WTC11 (cell line): ENCODE measurements at regions of chr1 and their contacts with region 1.

Region 1: GRCh38 chr1:227729881-227730627 is 5.0 kb downstream of the JMJD4 start:
- DNase-seq: peak; percentile 74
- ATAC-seq: peak; percentile 27
- H3K4me3 Mint-ChIP-seq: peak overlapping the region; percentile 90
- H3K27ac Mint-ChIP-seq: peak overlapping the region; percentile 83
- H3K4me1 Mint-ChIP-seq: peaks cover 34% of the 10 kb centered on the region
- H3K27me3 Mint-ChIP-seq: peaks cover 13% of the 10 kb centered on the region
- CTCF ChIP-seq: peak; percentile 68

Region 2: GRCh38 chr1:227654858-227655752 is 74.9 kb before region 1 on chr1:
- CTCF ChIA-PET with region 1: no interaction called
- POLR2A ChIA-PET with region 1: no interaction called
- DNase-seq: no peak
- ATAC-seq: no peak
- H3K4me3 Mint-ChIP-seq: no peak overlapping the region
- H3K27ac Mint-ChIP-seq: no peak overlapping the region
- H3K4me1 Mint-ChIP-seq: no peaks in the 10 kb centered on the region
- H3K27me3 Mint-ChIP-seq: peaks cover 11% of the 10 kb centered on the region
- CTCF ChIP-seq: no peak

Region 3: DNA sequence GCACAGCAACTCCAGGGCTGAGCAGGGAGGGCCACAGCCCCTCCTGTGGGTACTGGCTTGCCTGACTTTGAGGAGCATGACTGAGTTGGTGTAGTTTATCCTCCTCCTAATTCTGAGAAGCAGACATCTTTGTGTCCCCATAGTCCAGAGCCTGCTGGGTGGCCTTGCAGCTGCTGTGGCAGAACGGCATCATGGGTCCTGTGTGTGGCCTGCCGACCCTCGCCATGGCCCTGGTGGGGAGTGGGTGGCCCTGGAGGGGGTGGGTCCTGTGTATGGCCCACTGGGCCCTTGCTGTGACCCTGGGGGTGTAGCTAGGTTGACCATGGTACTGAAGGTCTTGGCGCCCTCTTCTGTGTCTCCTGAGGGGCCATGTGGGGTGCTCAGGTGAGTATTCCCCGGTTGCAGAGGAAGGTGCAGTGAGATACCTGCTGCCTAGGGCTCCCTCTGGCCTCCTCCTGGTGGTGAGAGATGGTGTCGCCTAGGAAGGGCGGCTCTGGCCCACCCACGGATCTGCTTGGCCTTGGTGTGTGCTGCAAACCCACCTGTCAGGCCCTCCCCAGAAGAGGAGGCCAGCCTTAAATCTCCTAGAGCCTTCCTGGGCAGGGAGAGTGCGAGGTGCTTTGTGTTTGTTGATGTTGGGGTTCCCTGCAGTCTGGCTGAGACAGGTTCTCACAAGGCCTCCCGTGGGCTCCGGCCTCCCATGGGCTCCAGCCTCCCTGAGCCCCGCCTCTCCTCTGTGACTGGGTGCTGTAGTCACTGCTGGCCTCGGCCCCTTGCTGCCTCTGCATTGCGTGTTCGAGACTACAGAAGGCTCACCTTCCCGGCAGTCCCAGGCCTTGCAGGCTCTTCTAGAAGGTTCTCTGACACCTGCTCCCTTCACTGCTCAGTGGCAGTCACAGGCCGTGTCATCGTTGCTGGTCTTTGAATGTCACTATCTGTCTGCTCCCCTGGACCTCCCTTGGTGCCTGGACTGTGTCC is 13.0 kb after region 1 on chr1:
- CTCF ChIA-PET with region 1: interaction called, 13 read pairs
- POLR2A ChIA-PET with region 1: no interaction called
- DNase-seq: no peak
- ATAC-seq: peak; percentile 71
- H3K4me3 Mint-ChIP-seq: no peak overlapping the region
- H3K27ac Mint-ChIP-seq: no peak overlapping the region
- H3K4me1 Mint-ChIP-seq: peaks cover 12% of the 10 kb centered on the region
- H3K27me3 Mint-ChIP-seq: no peaks in the 10 kb centered on the region
- CTCF ChIP-seq: 0 out of 2 replicates have a peak, but pooled peaks have one; percentile 14